H1 (cell line): ENCODE measurements at regions of chr1 and their contacts with region 1.

Region 1: DNA sequence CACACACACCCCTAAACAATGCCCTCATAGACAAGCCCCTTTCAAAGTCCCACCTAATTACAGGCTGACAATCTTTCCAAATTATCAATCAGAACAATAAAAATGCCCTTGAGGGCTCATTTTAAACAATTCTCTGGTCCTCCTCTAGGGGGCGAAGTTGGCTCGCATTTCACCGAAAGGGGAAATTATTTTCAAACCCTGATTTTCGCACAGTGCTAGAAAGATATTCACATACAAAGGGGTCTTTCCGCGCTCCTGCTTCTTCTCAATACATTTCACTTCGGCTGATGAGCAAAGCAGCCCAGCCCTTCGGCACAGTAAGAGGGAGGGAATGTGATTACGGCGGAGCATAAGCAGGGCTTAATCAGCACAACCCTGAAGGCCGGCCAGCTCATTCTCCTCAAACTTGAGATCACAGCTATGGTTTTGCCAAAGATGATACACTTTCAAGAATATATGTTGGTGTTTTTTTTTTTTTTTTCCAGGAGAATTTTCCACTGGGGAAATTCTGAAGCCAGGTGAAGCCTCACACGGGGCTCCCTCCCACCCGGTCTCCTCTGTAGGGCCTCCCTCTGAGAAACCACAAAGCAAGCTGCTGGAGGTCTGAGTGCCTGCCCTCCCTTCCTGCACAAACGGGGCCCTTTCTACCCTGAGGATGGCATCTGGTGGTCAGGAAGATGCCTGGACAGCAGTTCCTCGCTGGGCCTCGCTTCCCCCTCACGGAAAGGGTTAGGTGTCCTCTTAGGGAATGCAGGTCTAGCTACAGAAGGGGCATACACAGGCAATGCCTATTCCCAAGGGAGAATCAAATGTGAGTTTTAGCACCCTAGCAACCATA is 66.9 kb downstream of the GNG12 start:
- DNase-seq: peak in 1 of 2 experiments; percentile 66
- H3K4me3 ChIP-seq: peak overlapping the region in 1 of 4 experiments; percentile 49; a peak in 3 of 8 replicates
- H3K27ac ChIP-seq: no peak overlapping the region
- H3K4me1 ChIP-seq: peaks cover 0 to 4% (median 3%) of the 10 kb centered on the region in 4 experiments; a peak in 4 of 7 replicates
- H3K27me3 ChIP-seq: no peaks in the 10 kb centered on the region
- CTCF ChIP-seq: peak in 2 of 3 experiments; percentile 67 to 74; a peak in 3 of 4 replicates
- EP300 ChIP-seq: no peak
- POLR2A ChIP-seq: no peak
- RAD21 ChIP-seq: peak; percentile 75 to 83

Region 2: DNA sequence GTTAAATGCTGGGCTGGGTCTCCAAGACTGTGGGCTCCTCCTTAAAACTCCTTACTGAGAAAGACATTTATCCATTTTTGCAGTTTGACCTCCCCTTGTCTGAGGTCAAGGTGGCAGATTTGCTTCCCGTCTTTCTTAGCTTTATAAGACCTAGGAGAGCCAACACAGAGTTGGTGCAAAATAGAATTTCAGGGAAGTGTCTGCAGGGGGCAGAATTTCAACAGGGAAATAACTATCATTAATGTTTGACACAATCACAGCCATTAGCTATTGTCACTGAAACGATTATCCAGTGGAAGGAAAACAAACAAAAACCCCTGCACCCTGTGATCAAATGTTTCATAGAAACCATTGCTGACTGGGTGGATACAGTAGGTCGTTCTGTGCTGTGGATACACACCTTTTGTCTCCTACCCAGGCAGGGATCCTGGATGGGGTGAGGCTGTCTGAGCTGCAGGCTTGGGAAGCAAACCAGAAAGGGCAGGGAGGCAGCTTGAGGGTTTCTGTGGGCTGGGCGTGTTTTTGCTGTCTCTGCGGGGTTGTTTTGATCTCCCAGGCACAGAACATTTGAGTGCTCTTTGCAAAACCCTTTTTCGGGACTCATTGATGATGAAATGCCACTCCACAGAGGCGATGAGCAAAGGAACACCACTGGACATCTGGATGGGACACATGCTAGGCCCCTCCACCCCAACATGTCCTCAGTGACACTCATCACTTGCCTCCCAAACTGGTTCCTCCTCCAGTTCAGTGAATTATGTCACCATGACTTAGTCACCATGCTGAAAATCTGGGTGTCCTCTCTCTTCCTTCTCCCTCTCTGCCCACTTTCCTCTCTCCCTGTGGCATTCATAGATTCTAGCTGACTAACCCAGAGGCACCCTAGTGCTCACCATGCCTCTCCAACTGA is 242.0 kb before region 1 on chr1:
- CTCF ChIA-PET with region 1: interaction called, 17 read pairs
- POLR2A ChIA-PET with region 1: no interaction called
- DNase-seq: no peak
- H3K4me3 ChIP-seq: no peak overlapping the region
- H3K27ac ChIP-seq: no peak overlapping the region
- H3K4me1 ChIP-seq: no peaks in the 10 kb centered on the region
- H3K27me3 ChIP-seq: peaks cover 14 to 36% (median 22%) of the 10 kb centered on the region in 4 experiments
- CTCF ChIP-seq: peak in 2 of 3 experiments; percentile 5 to 48; a peak in 2 of 4 replicates
- EP300 ChIP-seq: no peak
- POLR2A ChIP-seq: no peak
- RAD21 ChIP-seq: peak in 1 of 2 experiments; percentile 32; a peak in 1 of 4 replicates

Region 3: DNA sequence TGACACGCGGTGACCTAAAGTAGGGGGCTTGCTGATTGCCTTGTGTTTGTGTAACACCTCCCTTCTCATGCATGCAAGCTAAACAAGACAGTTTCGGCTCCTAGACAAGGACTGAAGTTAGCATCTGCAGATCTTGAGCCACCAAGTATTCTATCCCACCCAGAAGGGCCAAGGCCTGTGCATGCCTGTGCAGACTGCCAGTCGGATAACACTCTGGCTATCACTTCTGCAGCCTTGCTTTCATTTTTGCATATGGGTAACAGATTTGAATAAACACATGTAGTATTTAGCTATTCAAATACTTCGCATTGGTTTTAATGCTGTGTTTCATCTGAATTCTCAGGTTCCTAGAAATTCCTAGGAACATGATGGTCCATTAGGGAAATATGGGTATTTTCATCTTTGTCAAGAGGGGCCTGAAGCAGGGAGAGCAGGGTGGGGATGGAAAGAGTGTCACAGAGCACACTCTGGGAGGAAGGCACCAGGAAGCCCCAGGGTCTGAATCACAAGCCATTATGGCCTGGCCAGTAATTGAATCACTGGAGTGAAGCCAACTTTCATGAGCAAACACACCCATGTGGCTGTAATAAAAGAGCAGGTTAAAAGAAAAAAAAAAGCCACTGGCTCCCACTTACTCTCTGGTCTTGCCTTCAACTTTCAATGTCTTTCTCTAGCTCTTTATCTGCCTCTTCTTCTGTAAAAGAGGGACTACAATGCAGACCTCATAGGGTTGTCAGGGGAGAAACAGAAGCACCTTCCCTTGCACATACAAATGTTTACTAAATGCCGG is 53.1 kb before region 1 on chr1:
- CTCF ChIA-PET with region 1: interaction called, 40 read pairs
- POLR2A ChIA-PET with region 1: no interaction called
- DNase-seq: no peak
- H3K4me3 ChIP-seq: no peak overlapping the region
- H3K27ac ChIP-seq: no peak overlapping the region
- H3K4me1 ChIP-seq: peaks cover 0 to 4% (median 0%) of the 10 kb centered on the region in 4 experiments; a peak in 1 of 7 replicates
- H3K27me3 ChIP-seq: no peaks in the 10 kb centered on the region
- CTCF ChIP-seq: no peak
- EP300 ChIP-seq: no peak
- POLR2A ChIP-seq: no peak
- RAD21 ChIP-seq: no peak

Region 4: GRCh38 chr1:67780637-67781036 is 14.3 kb after region 1 on chr1:
- CTCF ChIA-PET with region 1: interaction called, 156 read pairs
- POLR2A ChIA-PET with region 1: no interaction called
- DNase-seq: no peak
- H3K4me3 ChIP-seq: no peak overlapping the region
- H3K27ac ChIP-seq: no peak overlapping the region
- H3K4me1 ChIP-seq: no peaks in the 10 kb centered on the region
- H3K27me3 ChIP-seq: no peaks in the 10 kb centered on the region
- CTCF ChIP-seq: no peak
- EP300 ChIP-seq: no peak
- POLR2A ChIP-seq: no peak
- RAD21 ChIP-seq: no peak

Region 5: DNA sequence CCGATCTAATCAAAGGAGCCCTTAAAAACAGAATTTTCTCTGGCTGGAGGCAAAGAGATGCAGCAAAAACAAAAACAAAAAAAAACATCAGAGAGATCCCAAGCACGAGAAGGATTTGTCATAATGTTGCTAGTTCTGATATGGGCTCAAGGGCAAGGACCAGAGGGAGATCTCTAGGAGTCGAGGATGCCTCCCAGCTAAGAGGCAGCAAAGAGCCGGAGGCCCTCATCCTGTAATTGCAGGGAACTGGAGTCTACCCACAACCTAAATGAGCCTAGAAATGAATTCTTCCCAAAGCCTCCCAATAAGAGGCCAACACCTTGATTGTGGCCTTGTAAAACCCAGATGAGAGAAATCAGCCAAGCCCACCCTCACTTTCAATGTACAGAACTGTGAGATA is 54.9 kb after region 1 on chr1:
- CTCF ChIA-PET with region 1: interaction called, 26 read pairs
- POLR2A ChIA-PET with region 1: no interaction called
- DNase-seq: no peak
- H3K4me3 ChIP-seq: no peak overlapping the region
- H3K27ac ChIP-seq: no peak overlapping the region
- H3K4me1 ChIP-seq: peaks cover 0 to 6% (median 0%) of the 10 kb centered on the region in 4 experiments; a peak in 5 of 7 replicates
- H3K27me3 ChIP-seq: no peaks in the 10 kb centered on the region
- CTCF ChIP-seq: no peak
- EP300 ChIP-seq: no peak
- POLR2A ChIP-seq: no peak
- RAD21 ChIP-seq: no peak

Region 6: DNA sequence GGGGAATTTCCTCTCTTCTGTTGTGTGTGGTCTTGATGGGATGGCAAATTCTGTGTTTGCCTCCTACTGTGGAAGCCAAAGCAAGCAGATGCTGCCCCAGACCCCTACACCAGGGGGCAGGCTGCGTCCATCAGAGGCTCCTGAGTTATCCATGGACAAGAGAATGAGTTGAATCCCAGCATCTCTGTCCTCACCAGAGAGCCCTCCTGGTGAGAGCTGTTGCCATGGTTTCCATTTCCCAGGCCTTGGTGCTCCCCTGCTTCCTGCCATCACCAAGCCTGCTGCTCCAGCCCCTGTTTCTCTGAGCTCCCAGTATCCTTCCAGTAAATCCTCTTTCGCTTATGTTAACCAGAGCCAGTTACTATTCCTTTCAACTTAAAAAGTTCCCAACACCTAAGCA is 87.3 kb after region 1 on chr1:
- CTCF ChIA-PET with region 1: interaction called, 69 read pairs
- POLR2A ChIA-PET with region 1: no interaction called
- DNase-seq: peak; percentile 85 to 95
- H3K4me3 ChIP-seq: no peak overlapping the region
- H3K27ac ChIP-seq: no peak overlapping the region
- H3K4me1 ChIP-seq: no peaks in the 10 kb centered on the region
- H3K27me3 ChIP-seq: no peaks in the 10 kb centered on the region
- CTCF ChIP-seq: peak; percentile 92 to 98 (median 95)
- EP300 ChIP-seq: no peak
- POLR2A ChIP-seq: no peak
- RAD21 ChIP-seq: peak; percentile 100